Gastrocnemius medialis (tissue), 4 donors: ENCODE measurements at regions of chr11 and their contacts with region 1.

Region 1: DNA sequence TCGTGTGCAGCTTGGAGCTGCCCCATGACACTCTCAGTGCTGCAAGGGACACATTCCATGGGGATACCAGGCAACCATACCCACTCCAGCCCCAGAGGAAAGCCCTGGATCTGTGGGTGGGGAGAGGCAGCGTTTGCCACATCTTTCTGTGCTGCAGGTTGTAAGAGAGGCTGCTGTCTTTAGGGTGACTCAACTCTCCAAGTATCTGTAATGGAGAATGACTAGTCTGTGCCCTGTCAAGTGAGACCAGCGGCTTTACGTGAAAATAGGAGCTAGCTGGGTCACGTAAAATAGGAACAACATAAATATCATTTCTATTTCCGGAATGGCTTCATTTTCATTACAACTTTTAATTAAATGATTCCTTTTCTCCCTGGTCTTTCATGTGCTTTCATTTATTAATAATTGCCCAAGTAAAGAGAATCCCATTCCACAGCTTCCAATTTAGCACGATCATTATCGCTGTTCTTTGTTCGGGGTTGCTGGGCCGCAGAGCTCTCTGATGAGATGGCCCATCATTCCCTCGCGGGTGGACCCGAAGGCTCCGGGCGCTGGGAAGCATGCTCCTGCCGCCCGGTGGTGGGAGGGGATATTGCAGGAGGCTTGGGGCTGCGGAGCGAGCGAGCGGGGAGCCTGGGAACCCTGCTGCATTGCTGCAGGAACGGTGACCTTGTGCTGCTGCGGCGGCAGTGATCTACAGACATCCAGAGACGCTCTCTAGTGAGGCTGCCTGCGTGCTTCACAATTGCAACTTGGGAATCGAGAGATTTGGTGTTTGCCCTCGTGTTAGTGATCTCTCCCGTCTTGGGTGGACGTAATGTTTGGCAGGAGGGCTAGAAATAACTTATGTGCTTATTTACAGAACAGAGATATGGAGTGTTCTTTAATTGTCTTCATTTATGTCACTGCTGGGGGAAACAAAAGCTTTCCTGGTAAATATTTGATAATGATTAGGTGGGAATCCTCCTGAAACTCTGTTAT is 10.6 kb downstream of the SLC6A5 start:
- DNase-seq: peak; percentile 15 to 27
- ATAC-seq: peak in 1 of 2 donors; percentile 70
- H3K4me3 ChIP-seq: no peak overlapping the region
- H3K27ac ChIP-seq: no peak overlapping the region
- H3K4me1 ChIP-seq: peaks cover 0 to 4% of the 10 kb centered on the region in 2 donors
- H3K27me3 ChIP-seq: peaks cover 21 to 34% (median 28%) of the 10 kb centered on the region in 3 donors
- CTCF ChIP-seq: peak; percentile 71 to 88 (median 79)
- POLR2A ChIP-seq: no peak

Region 2: DNA sequence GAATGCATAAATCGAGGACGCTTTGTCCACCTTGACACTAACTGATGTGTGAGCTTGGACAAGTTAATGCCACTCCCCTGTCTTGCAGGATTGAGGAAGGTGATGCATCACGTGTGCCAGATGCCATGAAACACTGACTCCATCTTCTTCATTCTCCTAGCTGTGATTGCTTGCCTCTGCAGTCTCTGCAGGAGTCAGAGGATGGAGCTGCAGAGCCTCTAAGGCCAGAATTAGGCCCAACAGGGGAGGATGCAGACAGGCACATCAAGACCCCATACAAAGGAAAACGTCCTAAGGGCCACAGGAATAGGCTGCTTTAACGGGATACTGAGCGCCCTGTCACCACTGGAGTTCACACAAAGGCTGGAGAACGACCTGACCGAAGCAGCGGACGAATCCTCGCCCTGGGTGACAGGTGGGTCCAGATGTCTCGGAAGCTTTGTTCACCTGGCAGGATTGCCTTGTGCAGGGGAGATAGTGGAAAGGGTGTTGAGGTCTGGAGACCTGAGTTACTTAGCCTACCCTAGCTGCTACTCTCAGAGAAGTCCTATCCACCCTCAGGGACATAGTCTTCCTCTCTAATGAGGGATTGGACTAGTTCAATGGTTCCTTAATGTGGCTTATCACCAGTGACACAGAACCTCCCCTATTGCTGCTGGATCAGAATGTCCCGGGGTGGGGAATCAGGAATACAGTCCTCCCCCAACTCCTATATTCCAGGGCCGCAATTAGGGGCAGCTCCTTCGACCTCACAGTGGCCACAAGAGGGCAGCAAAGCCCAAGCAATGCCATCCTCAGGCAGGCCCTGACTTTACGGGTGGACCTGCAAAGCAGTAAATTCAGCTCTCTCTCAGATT is 482.1 kb before region 1 on chr11:
- in situ Hi-C with region 1: loop called in 3 of 4 experiments (anchors 25 kb)
- intact Hi-C with region 1: loop called (anchors 1 kb)
- DNase-seq: peak; percentile 17 to 45
- ATAC-seq: peak; percentile 75 to 87
- H3K4me3 ChIP-seq: no peak overlapping the region
- H3K27ac ChIP-seq: no peak overlapping the region
- H3K4me1 ChIP-seq: no peaks in the 10 kb centered on the region
- H3K27me3 ChIP-seq: no peaks in the 10 kb centered on the region
- CTCF ChIP-seq: peak; percentile 57 to 83 (median 83)
- POLR2A ChIP-seq: no peak

Region 3: DNA sequence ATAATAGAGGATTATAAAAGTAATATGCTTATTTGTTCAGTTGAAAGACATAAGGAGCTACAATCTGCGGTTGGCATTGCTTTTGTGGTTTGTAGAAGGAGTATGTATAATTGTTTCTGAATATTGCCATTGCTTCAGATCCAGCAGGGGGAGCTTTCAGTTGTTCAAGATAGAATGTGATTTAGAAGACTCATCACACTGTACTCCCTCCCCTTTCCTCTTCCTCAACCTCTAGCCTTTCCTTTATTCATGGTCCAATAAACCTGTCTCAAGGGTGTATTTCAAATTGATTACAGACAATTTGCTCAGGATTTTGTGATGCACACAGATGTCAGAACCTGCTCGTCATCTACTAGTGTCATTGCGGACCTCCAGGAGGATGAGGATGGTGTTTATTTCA is 212.7 kb before region 1 on chr11:
- in situ Hi-C with region 1: loop called in 3 of 4 experiments (anchors 10 to 25 kb)
- intact Hi-C with region 1: no loop called
- DNase-seq: no peak
- ATAC-seq: no peak
- H3K4me3 ChIP-seq: no peak overlapping the region
- H3K27ac ChIP-seq: no peak overlapping the region
- H3K4me1 ChIP-seq: no peaks in the 10 kb centered on the region
- H3K27me3 ChIP-seq: no peaks in the 10 kb centered on the region
- CTCF ChIP-seq: peak in 2 of 5 experiments; percentile 24 to 31
- POLR2A ChIP-seq: no peak